Activated T-helper 1 cell treated with anti-CD3 and anti-CD28 coated beads, Interleukin-12 subunit alpha, Interleukin-12 subunit beta, Interleukin-2, Interleukin-4 antibody, amounts not matched to agents 30 ng/mL and 10 ng/mL and 1 ng/mL, durations not matched to agents 14 hours and 24 hours and 36 hours (primary cell): ENCODE measurements at regions of chr6 and their contacts with region 1.

Region 1: GRCh38 chr6:13328076-13328874 is at the start of gene TBC1D7:
- DNase-seq: peak; percentile 93
- H3K4me3 Mint-ChIP-seq: peak within 1 kb of the TSS; percentile 84
- H3K27ac Mint-ChIP-seq: peak within 1 kb of the TSS; percentile 92
- H3K4me1 Mint-ChIP-seq: peaks cover 38% of the 10 kb centered on the region
- H3K27me3 Mint-ChIP-seq: peaks cover 2% of the 10 kb centered on the region
- total RNA-seq, gene TBC1D7: 27.3 and 28.2 TPM in 2 replicates

Region 2: DNA sequence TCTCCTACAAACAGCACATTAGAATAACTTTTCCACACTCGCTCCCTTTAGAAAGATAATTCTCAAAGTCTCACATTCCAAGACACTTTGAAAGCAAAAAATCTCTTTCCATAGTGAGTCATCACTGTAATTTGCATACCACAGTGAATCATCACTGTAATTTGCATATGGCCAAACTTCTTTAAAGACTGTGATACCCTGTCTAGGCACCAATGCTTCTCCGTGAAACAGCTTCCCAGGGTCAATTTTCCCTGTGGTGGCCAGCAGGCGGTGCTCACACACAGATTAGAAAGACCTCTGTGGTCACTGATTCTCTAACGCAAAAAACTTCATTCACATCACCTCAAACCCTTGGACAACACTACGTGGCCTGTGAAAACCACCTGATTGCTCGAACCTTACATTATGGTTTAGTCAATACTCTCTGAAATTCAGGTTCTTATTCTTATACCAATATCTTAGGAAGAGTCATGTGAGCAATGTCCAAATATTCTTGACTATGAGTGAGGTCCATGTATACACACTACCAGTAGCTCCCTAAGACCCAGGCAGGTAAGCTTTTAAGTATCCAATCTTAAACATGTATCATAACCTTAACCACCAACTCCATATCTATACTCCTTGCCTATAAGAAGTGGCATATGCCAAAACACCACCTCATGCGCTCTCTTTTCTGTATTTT is 690.2 kb before region 1 on chr6:
- intact Hi-C with region 1: loop called (anchors 5 kb)
- DNase-seq: no peak
- H3K4me3 Mint-ChIP-seq: no peak overlapping the region
- H3K27ac Mint-ChIP-seq: no peak overlapping the region
- H3K4me1 Mint-ChIP-seq: peaks cover 7% of the 10 kb centered on the region
- H3K27me3 Mint-ChIP-seq: peaks cover 7% of the 10 kb centered on the region

Region 3: DNA sequence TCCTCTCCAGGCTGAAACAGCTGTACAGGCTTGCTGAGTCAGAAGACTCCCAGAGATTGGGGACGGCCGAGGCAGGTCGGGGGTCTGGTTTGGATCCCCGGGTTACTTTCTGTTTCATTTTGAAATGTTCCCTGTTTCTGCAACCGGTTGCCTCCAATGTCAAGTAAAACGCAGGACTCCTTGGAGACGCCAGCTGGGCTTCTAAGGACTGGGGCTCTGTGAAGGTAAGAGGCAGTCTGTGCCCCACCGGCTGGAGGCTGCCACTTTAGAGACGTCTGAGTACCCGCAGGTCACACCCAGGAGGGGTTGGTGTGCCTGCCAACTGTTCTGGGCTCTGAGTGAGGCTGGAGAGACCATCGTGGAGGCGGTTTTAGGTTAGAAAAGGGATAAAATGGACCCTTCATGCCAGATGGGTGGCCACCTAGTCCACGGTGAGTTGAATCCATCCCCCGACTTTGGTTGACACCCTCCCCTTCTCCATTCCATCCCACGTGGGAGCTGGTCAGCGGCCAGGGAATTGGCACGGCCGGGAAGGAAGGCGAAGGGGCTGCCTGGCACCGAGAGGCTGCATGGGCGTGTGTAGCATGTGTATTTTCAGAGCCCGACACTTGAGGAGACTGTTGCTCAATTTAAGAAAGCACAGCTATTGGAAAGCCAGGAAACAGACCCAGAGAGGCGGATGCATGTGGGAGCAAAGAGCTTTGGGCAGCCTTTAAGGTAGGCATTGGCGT is 370.8 kb before region 1 on chr6:
- intact Hi-C with region 1: loop called (anchors 5 kb)
- DNase-seq: peak; percentile 2
- H3K4me3 Mint-ChIP-seq: peak overlapping the region; percentile 84
- H3K27ac Mint-ChIP-seq: no peak overlapping the region
- H3K4me1 Mint-ChIP-seq: peaks cover 48% of the 10 kb centered on the region
- H3K27me3 Mint-ChIP-seq: peaks cover 37% of the 10 kb centered on the region

Region 4: GRCh38 chr6:13272131-13273046 is 55.9 kb before region 1 on chr6:
- intact Hi-C with region 1: loop called (anchors 1 kb)
- DNase-seq: no peak
- H3K4me3 Mint-ChIP-seq: no peak overlapping the region
- H3K27ac Mint-ChIP-seq: no peak overlapping the region
- H3K4me1 Mint-ChIP-seq: peaks cover 24% of the 10 kb centered on the region
- H3K27me3 Mint-ChIP-seq: peaks cover 7% of the 10 kb centered on the region

Region 5: DNA sequence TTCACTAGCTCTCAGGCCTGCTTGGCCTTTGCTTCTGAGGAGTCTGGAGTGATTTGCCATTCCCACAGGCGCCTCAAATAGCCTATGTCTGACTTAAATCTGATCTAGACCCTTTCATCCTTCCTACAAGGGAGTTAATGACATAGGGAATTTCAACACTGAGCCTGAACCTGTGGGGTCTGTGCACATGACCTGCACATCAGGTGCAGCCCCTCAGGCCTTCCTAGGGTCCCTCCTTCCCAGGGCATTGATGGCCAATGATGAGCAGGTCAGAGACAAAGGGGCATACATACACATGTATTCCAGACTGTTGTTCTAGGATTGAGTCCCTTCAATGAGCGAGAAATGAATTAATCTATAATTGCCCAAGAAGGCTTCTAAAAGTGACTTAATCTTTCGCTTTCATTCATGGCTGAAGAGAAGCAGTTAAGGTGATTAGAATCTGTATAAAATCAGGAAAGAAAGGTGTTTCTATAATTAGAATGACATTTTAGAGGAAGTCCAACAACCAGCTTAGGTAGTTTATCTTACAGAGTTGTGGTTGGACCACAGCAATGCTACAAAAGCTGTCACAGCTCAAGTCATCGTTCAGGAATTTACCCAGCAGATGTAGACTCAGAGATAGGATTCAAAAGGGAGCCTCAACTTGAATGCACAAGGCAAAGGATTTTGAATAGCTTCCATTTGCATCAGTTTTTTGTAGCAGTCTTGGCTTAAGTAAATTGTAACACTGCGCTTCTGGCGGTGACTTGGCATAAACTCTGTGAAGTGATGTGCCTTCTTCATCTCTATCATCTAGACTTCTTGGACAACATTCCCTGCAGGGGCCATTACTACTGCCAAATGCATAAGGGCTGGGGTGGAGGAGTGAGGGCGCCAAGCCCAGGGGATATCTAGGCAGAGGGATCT is 27.0 kb after region 1 on chr6:
- intact Hi-C with region 1: loop called (anchors 2 kb)
- DNase-seq: peak; percentile 36
- H3K4me3 Mint-ChIP-seq: peak overlapping the region; percentile 75
- H3K27ac Mint-ChIP-seq: peak overlapping the region; percentile 95
- H3K4me1 Mint-ChIP-seq: peaks cover 67% of the 10 kb centered on the region
- H3K27me3 Mint-ChIP-seq: no peaks in the 10 kb centered on the region

Region 6: GRCh38 chr6:13487122-13488014 is 159.1 kb after region 1 on chr6 and contains the start of gene GFOD1:
- intact Hi-C with region 1: loop called (anchors 1 kb)
- DNase-seq: peak; percentile 80
- H3K4me3 Mint-ChIP-seq: peak within 1 kb of the TSS; percentile 89
- H3K27ac Mint-ChIP-seq: peak within 1 kb of the TSS; percentile 72
- H3K4me1 Mint-ChIP-seq: peaks cover 39% of the 10 kb centered on the region
- H3K27me3 Mint-ChIP-seq: peaks cover 10% of the 10 kb centered on the region
- total RNA-seq, gene GFOD1: 12.4 and 13.6 TPM in 2 replicates

Region 7: DNA sequence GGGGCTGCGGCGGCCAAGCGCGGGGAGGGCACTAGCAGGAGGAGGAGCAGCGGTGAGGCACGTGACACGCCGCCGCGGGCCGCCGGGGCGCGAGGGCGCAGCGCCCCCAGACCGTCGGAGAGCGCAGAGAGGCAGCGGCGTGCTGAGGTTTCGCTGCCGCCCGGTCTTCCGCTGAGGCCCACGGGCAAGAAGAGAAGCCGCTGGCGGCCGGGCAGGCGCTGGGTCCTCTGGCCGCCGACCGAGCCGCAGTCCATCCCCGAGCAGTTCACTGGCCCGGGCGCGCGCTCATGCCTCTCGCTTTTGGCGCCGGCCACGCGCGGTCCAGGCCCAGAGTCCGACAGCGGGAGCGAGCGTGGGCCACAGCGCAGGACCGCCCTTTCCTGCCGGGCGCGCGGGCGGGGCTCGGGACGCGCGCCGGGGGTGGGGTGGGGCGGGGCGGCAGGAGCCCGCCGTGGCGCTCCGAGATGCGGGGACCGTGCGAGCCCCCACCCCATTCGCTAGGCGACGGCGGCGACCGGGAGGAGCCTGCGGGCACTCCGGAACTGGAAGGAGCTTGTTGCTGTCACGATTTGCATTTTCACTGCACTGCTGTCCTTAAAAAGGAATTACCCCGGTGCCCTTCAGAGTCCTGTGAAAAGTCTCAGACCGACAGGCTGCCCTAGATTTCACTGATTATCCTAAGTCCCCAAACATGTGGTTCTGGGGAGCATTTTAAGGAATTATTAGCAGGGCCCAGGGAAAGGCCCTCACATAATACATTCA is 486.1 kb after region 1 on chr6 and contains the start of gene MCUR1:
- intact Hi-C with region 1: loop called (anchors 5 kb)
- DNase-seq: peak; percentile 80
- H3K4me3 Mint-ChIP-seq: peak within 1 kb of the TSS; percentile 85
- H3K27ac Mint-ChIP-seq: peak within 1 kb of the TSS; percentile 52
- H3K4me1 Mint-ChIP-seq: peaks cover 38% of the 10 kb centered on the region
- H3K27me3 Mint-ChIP-seq: peaks cover 2% of the 10 kb centered on the region
- total RNA-seq, gene MCUR1: 37.8 and 40.2 TPM in 2 replicates